MCF 10A (cell line): ENCODE measurements at regions of chr3 and their contacts with region 1.

Region 1: DNA sequence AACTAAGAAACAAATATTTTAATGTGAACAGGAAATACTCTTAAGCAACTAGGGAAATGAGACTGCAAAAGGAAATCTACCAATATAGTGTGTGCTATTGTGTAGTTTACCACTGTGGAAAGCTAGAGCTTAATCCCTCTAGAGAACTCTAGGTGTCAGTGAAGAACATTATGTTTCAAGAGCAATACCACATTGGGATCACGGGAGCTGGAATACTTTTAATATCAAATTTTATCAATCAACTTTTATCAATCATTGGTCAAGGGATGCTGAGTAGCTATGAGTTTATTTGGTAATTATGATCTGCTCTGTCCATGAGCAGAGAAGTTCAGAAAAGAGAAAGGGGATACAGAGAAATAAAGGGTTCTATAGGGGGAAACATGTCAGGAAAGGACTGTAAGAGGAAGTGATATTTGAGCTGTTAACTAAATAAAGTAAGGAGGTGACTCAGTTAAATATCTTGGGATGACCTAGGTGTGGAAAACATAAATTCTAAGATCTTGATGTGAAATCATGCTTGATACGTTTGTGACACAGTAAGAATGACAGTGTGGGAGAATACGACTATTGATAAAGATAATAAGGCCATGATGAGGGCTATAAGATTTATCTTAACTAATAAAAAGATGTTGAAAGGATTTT is 762.2 kb upstream of the ALCAM start:
- DNase-seq: peak; percentile 33
- H3K4me3 Mint-ChIP-seq: no peak overlapping the region
- H3K27ac Mint-ChIP-seq: no peak overlapping the region
- H3K4me1 Mint-ChIP-seq: peaks cover 6% of the 10 kb centered on the region
- H3K27me3 Mint-ChIP-seq: no peaks in the 10 kb centered on the region
- CTCF ChIP-seq: peak; percentile 43

Region 2: DNA sequence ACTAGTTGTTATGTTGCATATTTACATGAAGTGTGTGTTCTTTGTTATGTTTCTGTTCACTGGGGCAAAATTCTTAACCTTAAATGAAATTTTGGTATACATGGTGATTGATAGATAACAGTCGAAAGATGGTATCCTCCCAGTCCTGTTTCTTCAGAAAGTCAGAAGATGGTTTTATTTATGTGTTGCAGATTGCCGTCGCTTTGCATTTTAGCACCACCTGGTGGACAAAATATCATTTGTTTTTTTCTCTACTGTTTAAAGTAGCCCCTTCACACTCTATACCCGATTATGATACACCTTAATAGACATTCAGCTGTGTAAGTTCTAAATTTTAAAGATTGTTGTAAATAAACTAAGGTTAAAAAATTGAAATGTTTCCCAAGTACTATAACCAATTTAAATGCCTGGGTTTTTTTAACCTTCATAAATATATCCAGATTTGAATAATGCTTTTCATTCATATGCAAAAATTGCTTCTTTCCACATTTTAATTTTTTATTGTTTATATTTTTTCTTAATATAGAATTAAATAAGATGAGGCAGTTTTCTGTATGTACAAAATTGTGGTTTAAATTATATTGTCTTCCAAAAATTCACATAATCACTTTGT is 914.4 kb after region 1 on chr3:
- CTCF ChIA-PET with region 1: interaction called, 4 read pairs
- POLR2A ChIA-PET with region 1: no interaction called
- intact Hi-C with region 1: loop called (anchors 2 kb)
- DNase-seq: peak; percentile 74
- H3K4me3 Mint-ChIP-seq: no peak overlapping the region
- H3K27ac Mint-ChIP-seq: no peak overlapping the region
- H3K4me1 Mint-ChIP-seq: no peaks in the 10 kb centered on the region
- H3K27me3 Mint-ChIP-seq: no peaks in the 10 kb centered on the region
- CTCF ChIP-seq: peak; percentile 60